Dorsolateral prefrontal cortex (tissue), 120 donors: ENCODE measurements at regions of chr11 and their contacts with region 1.

Region 1: DNA sequence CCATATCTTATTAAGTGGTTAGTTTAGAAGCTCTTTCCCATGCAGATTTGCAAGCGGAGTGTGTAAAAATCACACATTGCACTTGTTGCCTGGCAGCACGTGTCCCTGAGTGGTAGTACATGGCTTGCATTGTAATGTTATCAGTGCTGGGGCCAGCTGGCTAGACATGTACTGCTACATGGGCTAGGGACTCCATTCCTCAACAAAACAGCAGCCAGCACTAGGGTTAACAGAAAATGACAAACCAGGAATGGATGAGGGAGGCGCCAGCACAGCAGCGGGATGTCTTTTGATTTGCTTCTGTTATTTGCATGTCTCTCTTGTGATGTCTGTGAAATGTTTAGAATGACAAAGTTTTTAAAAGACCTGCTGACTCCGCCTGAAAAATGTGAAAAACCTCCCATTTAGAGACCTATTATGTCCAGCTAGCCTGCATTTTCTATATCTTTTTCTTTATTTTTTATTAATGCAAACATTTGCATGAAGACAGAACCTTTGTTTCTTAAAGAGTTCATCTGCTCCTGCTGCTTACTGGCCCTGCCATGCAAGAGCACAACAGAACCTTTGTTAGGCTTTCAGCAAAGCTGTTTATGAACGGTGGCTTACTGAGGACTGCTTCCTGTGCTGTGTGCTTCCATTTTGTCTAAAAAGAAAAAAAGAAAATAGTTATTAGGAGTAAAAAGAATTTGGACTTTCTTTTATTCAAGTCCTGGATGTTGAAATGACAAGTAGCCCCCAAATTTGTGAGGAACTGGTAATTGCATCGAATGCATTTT is 40.7 kb downstream of the CSTPP1 start:
- DNase-seq: peak; percentile 20 to 81 (median 54)
- H3K4me3 ChIP-seq: peak overlapping the region in 40 of 59 donors; percentile 0 to 53 (median 21)
- H3K27ac ChIP-seq: peak overlapping the region; percentile 41 to 97 (median 88)
- H3K27me3 ChIP-seq: no peaks in the 10 kb centered on the region
- CTCF ChIP-seq: peak in 1 of 56 donors; percentile 12

Region 2: GRCh38 chr11:46769636-46770221 is 207.5 kb before region 1 on chr11:
- intact Hi-C with region 1: no loop called
- DNase-seq: no peak
- H3K4me3 ChIP-seq: no peak overlapping the region
- H3K27ac ChIP-seq: no peak overlapping the region
- H3K27me3 ChIP-seq: no peaks in the 10 kb centered on the region
- CTCF ChIP-seq: no peak

Region 3: GRCh38 chr11:46906609-46907041 is 70.6 kb before region 1 on chr11:
- intact Hi-C with region 1: loop called (anchors 5 to 10 kb)
- DNase-seq: peak in 3 of 10 donors; percentile 47 to 66 (median 58)
- H3K4me3 ChIP-seq: peak overlapping the region in 8 of 59 donors; percentile 9 to 31 (median 13)
- H3K27ac ChIP-seq: peak overlapping the region; percentile 13 to 99 (median 87)
- H3K27me3 ChIP-seq: peaks cover 0 to 6% (median 0%) of the 10 kb centered on the region in 45 donors
- CTCF ChIP-seq: peak in 1 of 56 donors; percentile 8